ENCODE measurements at regions of chrX and their contacts with region 1.

Region 1: DNA sequence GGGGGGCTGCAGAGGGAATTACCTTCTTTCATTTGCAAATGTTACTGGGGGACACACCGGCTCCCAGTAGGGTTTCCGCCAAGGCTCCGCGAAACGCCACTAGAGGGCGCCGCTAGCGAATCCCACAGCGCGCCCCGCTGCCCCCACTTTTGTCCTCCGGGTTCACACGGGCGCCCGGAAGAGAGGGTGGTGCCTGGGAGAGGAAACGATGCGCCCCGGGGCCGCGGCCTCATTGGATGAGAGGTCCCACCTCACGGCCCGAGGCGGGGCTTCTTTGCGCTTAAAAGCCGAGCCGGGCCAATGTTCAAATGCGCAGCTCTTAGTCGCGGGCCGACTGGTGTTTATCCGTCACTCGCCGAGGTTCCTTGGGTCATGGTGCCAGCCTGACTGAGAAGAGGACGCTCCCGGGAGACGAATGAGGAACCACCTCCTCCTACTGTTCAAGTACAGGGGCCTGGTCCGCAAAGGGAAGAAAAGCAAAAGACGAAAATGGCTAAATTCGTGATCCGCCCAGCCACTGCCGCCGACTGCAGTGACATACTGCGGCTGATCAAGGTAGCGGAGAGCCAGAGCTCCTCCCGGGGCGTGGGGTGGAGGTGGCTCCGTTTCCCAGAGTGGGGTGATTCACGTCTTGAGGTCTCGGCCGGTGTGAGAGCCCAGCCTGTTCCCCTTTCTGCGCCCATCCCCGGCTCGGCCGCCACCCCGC is at the start of gene SAT1:
- DNase-seq: no peak
- ATAC-seq: peak; percentile 87
- H3K4me3 ChIP-seq: peak within 1 kb of the TSS; percentile 62 to 79
- H3K27ac ChIP-seq: peak within 1 kb of the TSS; percentile 87
- H3K4me1 ChIP-seq: no peaks in the 10 kb centered on the region
- H3K27me3 ChIP-seq: no peaks in the 10 kb centered on the region
- CTCF ChIP-seq: peak; percentile 88
- total RNA-seq, gene SAT1: 173 TPM

Region 2: DNA sequence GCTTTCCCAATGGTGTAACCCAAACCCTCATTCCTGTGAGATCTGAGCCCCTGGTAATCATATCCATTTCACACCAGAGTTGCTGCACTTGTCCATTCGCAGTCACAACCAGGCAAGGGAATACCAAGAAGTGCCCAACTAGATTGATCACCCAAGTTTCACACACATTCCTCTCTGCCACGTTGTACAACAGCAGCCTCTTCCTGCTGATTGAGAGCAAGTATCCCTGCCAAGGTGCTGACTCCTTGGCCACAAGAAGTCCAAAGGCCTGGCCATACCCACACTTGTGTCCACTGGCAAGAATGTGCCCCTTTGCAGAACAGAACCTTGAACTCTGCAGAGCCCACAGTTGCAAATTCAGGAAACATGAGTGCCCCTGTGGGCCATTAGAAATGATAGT is 33.4 kb before region 1 on chrX:
- CTCF ChIA-PET with region 1: no interaction called
- POLR2A ChIA-PET with region 1: interaction called, 10 read pairs
- in situ Hi-C with region 1: no loop called
- intact Hi-C with region 1: no loop called
- DNase-seq: no peak
- ATAC-seq: no peak
- H3K4me3 ChIP-seq: no peak overlapping the region
- H3K27ac ChIP-seq: no peak overlapping the region
- H3K4me1 ChIP-seq: no peaks in the 10 kb centered on the region
- H3K27me3 ChIP-seq: no peaks in the 10 kb centered on the region
- CTCF ChIP-seq: no peak

Region 3: GRCh38 chrX:23888887-23889501 is 106.0 kb after region 1 on chrX:
- CTCF ChIA-PET with region 1: interaction called, 13 read pairs
- POLR2A ChIA-PET with region 1: interaction called, 6 read pairs
- in situ Hi-C with region 1: no loop called
- intact Hi-C with region 1: no loop called
- DNase-seq: no peak
- ATAC-seq: peak; percentile 75
- H3K4me3 ChIP-seq: no peak overlapping the region; a peak in 1 of 4 replicates
- H3K27ac ChIP-seq: peak overlapping the region; percentile 75
- H3K4me1 ChIP-seq: peaks cover 16% of the 10 kb centered on the region
- H3K27me3 ChIP-seq: no peaks in the 10 kb centered on the region
- CTCF ChIP-seq: no peak

Region 4: DNA sequence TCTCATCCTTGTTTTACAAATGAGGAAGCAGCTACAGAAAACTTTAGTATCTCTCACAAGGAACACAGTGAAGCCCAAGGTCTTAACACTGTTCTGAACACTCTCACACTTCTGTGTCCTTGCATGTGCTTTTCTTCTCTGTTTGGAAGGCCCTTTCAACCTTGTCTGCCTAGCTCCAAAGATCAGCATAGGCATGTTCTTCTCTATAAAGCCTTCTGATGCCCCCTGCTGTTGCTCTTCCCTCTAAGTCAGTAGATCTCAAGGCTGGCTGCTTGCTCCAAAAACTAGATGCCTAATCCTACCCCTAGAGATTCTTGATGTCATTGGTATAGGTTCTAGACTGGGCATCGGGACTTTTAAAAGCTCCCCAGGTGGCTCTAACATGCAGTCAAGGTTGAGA is 118.8 kb after region 1 on chrX:
- CTCF ChIA-PET with region 1: interaction called, 4 read pairs
- POLR2A ChIA-PET with region 1: interaction called, 15 read pairs
- in situ Hi-C with region 1: no loop called
- intact Hi-C with region 1: loop called (anchors 2 kb)
- DNase-seq: no peak
- ATAC-seq: peak; percentile 86
- H3K4me3 ChIP-seq: no peak overlapping the region
- H3K27ac ChIP-seq: peak overlapping the region; percentile 89
- H3K4me1 ChIP-seq: peaks cover 21% of the 10 kb centered on the region
- H3K27me3 ChIP-seq: no peaks in the 10 kb centered on the region
- CTCF ChIP-seq: peak; percentile 69